MCF 10A (cell line): ENCODE measurements at regions of chr6 and their contacts with region 1.

Region 1: DNA sequence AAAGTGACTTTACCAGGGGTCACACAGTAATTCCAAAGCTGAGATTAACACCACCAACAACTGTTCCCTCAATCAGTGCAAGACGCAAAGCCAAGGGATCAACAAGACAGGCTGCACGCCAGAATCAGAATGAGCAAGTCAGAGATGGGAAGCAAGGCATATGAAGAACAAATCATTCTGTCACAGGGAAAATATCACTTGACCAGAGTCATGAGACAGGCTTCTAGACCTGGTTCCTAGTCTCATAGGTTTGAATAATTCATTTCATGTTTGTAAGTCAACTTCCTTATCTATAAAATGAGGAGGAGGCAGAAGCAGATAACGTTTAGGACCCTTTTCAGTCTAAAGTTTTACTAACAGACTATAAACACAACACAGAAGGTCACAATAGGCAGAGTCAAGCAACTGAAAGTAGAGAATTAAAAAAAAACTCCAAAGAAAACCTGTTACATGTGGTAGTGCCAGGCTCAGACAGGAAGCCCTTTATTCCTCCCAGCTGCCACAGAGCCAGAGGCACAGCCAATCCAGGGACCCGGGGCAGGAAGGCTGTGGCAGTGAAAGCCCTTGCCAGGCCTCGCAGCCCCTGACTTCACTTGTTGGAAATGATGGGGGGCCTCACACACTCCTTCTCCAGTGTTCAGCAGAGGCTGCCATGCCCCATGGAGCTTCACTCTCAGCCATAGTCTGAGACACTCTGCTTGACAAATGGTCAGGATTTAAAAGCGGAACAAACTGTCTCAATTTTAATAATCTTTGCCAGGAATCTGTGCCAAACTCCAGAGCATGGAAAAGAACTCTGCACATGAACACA is 29.2 kb upstream of the DST start:
- DNase-seq: no peak
- H3K4me3 Mint-ChIP-seq: no peak overlapping the region
- H3K27ac Mint-ChIP-seq: peak overlapping the region; percentile 73
- H3K4me1 Mint-ChIP-seq: peaks cover 17% of the 10 kb centered on the region
- H3K27me3 Mint-ChIP-seq: no peaks in the 10 kb centered on the region
- CTCF ChIP-seq: no peak

Region 2: GRCh38 chr6:55974688-55975087 is 697.2 kb before region 1 on chr6:
- CTCF ChIA-PET with region 1: no interaction called
- POLR2A ChIA-PET with region 1: no interaction called
- intact Hi-C with region 1: no loop called
- DNase-seq: no peak
- H3K4me3 Mint-ChIP-seq: no peak overlapping the region
- H3K27ac Mint-ChIP-seq: no peak overlapping the region
- H3K4me1 Mint-ChIP-seq: no peaks in the 10 kb centered on the region
- H3K27me3 Mint-ChIP-seq: no peaks in the 10 kb centered on the region
- CTCF ChIP-seq: no peak

Region 3: GRCh38 chr6:56624046-56624727 is 47.7 kb before region 1 on chr6:
- CTCF ChIA-PET with region 1: interaction called, 22 read pairs
- POLR2A ChIA-PET with region 1: interaction called, 1,548 read pairs
- intact Hi-C with region 1: no loop called
- DNase-seq: no peak
- H3K4me3 Mint-ChIP-seq: no peak overlapping the region
- H3K27ac Mint-ChIP-seq: no peak overlapping the region
- H3K4me1 Mint-ChIP-seq: peaks cover 6% of the 10 kb centered on the region
- H3K27me3 Mint-ChIP-seq: no peaks in the 10 kb centered on the region
- CTCF ChIP-seq: no peak

Region 4: DNA sequence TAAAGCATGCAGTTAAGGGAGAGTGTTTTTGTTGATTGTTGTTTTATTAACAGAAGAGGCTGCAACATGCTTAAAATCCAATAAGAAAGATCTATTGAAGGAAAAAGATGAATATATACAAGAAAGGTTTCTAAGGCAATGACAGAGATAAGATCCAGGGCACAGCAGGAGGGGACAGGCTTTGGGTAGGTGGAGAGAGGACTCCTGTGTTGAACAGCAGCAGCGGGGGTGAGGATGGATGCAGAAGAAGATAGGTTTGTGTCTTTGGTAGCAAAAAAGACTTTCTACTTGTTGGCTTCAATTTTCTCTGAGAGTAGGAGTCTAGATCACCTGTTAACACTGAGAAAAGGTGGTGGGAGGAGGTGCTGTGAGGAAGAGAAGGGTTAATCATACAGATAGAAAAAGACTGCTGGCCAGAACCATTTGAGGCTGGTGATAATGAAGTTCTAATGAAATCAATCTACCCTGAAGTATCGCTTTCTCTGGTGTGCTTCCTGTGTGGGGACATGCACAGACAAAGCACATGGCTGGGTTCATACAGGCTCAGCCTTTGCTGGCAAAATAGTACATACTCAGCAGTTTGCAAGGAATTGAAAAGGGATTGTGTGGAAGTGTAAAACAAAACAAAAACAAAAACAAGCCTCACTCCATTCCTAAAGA is 12.0 kb before region 1 on chr6:
- CTCF ChIA-PET with region 1: interaction called, 7 read pairs
- POLR2A ChIA-PET with region 1: interaction called, 1,059 read pairs
- intact Hi-C with region 1: no loop called
- DNase-seq: peak; percentile 42
- H3K4me3 Mint-ChIP-seq: peak overlapping the region; percentile 2
- H3K27ac Mint-ChIP-seq: peak overlapping the region; percentile 95
- H3K4me1 Mint-ChIP-seq: peaks cover 61% of the 10 kb centered on the region
- H3K27me3 Mint-ChIP-seq: no peaks in the 10 kb centered on the region
- CTCF ChIP-seq: no peak

Region 5: GRCh38 chr6:57316581-57317059 is 644.8 kb after region 1 on chr6:
- CTCF ChIA-PET with region 1: no interaction called
- POLR2A ChIA-PET with region 1: no interaction called
- intact Hi-C with region 1: no loop called
- DNase-seq: peak; percentile 94
- H3K4me3 Mint-ChIP-seq: peak overlapping the region; percentile 95
- H3K27ac Mint-ChIP-seq: peak overlapping the region; percentile 88
- H3K4me1 Mint-ChIP-seq: peaks cover 32% of the 10 kb centered on the region
- H3K27me3 Mint-ChIP-seq: no peaks in the 10 kb centered on the region
- CTCF ChIP-seq: peak; percentile 82